Naive thymus-derived CD4-positive, alpha-beta T cell (primary cell): ENCODE measurements at regions of chr4 and their contacts with region 1.

Region 1: GRCh38 chr4:123776254-123776653 is 379.7 kb downstream of the SPRY1 start:
- DNase-seq: no peak
- ATAC-seq: no peak
- H3K4me3 ChIP-seq: no peak overlapping the region
- H3K4me3 Mint-ChIP-seq: no peak overlapping the region
- H3K27ac ChIP-seq: no peak overlapping the region
- H3K27ac Mint-ChIP-seq: no peak overlapping the region
- H3K4me1 ChIP-seq: no peaks in the 10 kb centered on the region
- H3K4me1 Mint-ChIP-seq: peaks cover 0 to 2% (median 0%) of the 10 kb centered on the region in 7 donors
- H3K27me3 ChIP-seq: no peaks in the 10 kb centered on the region
- H3K27me3 Mint-ChIP-seq: peaks cover 0 to 8% (median 5%) of the 10 kb centered on the region in 5 donors

Region 2: DNA sequence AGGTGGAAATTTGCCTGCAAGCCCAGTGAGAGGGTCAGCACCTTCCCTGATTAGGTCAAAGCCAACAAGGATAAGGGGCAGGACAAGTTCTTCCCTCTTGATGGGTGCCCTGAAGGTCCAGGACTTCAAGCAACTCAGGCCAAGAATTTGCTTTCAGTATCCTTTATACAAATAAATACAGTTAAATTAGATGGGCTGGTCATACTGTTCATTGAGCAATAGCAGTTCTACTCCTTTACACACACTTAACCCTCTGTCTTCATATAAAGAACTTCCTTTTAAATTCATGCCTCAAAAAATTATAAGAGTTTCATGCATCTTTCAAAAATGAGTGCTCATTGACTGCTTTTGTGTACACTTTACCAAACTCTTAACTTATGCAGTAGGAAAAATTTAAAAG is 12.3 kb after region 1 on chr4:
- CTCF ChIA-PET with region 1: no interaction called
- POLR2A ChIA-PET with region 1: no interaction called
- intact Hi-C with region 1: no loop called
- DNase-seq: no peak
- ATAC-seq: no peak
- H3K4me3 ChIP-seq: no peak overlapping the region
- H3K4me3 Mint-ChIP-seq: no peak overlapping the region
- H3K27ac ChIP-seq: no peak overlapping the region
- H3K27ac Mint-ChIP-seq: no peak overlapping the region
- H3K4me1 ChIP-seq: no peaks in the 10 kb centered on the region
- H3K4me1 Mint-ChIP-seq: no peaks in the 10 kb centered on the region
- H3K27me3 ChIP-seq: no peaks in the 10 kb centered on the region
- H3K27me3 Mint-ChIP-seq: peaks cover 0 to 5% (median 0%) of the 10 kb centered on the region in 5 donors

Region 3: GRCh38 chr4:124262211-124263179 is 486.2 kb after region 1 on chr4:
- CTCF ChIA-PET with region 1: no interaction called
- POLR2A ChIA-PET with region 1: no interaction called
- intact Hi-C with region 1: loop called in 1 of 2 experiments (anchors 1 kb)
- DNase-seq: peak in 6 of 9 donors; percentile 7 to 28 (median 20)
- ATAC-seq: peak; percentile 47
- H3K4me3 ChIP-seq: no peak overlapping the region
- H3K4me3 Mint-ChIP-seq: no peak overlapping the region
- H3K27ac ChIP-seq: no peak overlapping the region
- H3K27ac Mint-ChIP-seq: no peak overlapping the region
- H3K4me1 ChIP-seq: no peaks in the 10 kb centered on the region
- H3K4me1 Mint-ChIP-seq: no peaks in the 10 kb centered on the region
- H3K27me3 ChIP-seq: no peaks in the 10 kb centered on the region
- H3K27me3 Mint-ChIP-seq: peaks cover 0 to 14% (median 4%) of the 10 kb centered on the region in 5 donors

Region 4: DNA sequence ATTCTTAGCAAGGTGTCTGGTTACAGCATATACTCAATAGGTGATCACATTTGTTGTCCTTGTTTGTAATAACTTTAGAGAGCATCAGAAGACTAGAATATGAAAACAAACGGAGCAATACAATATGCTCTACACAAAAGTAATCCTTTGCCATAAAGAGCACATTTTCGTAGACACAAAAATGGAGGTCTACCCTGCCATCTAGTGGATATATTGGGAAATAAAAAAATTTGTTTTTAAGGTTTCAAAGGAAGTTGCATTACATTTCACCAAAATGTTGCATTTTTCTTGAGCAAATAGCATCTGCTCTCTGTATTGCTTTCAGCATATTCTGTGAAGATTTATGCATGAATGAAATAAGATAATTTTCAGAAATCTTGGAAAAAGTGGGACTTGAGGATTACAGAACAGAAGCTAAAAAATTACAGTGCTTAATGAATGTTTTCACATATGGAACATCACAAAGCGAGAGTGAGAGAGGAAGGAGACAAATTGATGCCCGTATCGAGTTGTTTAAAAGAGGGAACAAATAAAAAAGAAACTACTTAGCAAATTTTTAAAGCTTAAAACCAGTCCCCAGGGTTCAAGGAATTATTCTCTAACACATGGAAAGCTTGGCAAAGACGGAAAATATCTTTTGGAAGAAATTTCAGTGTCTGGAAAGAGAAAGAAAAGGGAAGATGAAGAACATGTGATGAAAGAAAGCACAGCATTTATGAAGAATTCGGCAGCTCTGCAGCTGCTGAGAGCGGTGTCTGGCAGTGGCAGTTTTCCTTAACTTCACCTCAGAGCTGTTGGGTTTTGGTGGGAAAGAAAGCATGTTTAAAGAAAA is 546.2 kb after region 1 on chr4:
- CTCF ChIA-PET with region 1: no interaction called
- POLR2A ChIA-PET with region 1: no interaction called
- intact Hi-C with region 1: loop called in 1 of 2 experiments (anchors 1 kb)
- DNase-seq: peak in 4 of 9 donors; percentile 6 to 22 (median 12)
- ATAC-seq: no peak
- H3K4me3 ChIP-seq: no peak overlapping the region
- H3K4me3 Mint-ChIP-seq: no peak overlapping the region
- H3K27ac ChIP-seq: no peak overlapping the region
- H3K27ac Mint-ChIP-seq: no peak overlapping the region
- H3K4me1 ChIP-seq: no peaks in the 10 kb centered on the region
- H3K4me1 Mint-ChIP-seq: no peaks in the 10 kb centered on the region
- H3K27me3 ChIP-seq: no peaks in the 10 kb centered on the region
- H3K27me3 Mint-ChIP-seq: peaks cover 0 to 3% (median 0%) of the 10 kb centered on the region in 5 donors